ENCODE measurements at regions of chr7 and their contacts with region 1.

Region 1: DNA sequence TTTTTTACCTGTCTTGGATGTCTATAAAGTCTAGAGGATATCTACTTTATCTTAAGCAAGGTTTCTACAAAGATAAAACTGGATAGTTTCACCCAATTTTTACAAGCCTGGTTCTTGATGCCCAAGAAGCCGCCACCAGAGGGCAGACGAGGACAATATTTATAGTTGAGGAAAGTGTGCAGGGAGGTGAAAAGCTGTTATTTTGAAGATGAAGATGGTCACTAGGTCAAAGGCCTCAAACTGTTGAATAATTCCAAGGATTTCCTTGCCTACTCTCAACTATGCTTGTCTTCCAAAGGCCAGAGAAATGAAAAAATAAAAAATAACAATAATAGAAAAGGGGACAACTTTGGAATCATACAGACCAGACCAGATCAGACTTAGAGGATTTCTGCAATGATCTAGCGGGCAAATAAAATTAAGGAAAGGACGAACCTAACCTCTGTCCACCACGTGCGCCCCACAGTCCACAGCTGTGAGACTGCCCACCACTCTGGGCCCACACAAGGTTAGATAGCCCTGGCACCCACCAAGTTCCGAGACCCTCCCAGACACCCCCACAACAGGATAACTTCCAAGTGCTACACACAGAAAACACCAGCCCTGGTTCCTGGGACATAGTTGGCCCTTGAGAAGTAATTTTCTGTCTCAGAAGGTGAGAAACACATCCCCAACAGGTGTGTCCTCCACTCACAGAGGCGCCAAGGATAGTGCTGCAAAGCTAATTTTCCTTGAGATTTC is 2.8 kb downstream of the PKD1L1 start:
- DNase-seq: peak; percentile 87 to 94
- ATAC-seq: no peak
- H3K4me3 ChIP-seq: no peak overlapping the region
- H3K27ac ChIP-seq: no peak overlapping the region
- H3K4me1 ChIP-seq: no peaks in the 10 kb centered on the region
- H3K27me3 ChIP-seq: no peaks in the 10 kb centered on the region

Region 2: DNA sequence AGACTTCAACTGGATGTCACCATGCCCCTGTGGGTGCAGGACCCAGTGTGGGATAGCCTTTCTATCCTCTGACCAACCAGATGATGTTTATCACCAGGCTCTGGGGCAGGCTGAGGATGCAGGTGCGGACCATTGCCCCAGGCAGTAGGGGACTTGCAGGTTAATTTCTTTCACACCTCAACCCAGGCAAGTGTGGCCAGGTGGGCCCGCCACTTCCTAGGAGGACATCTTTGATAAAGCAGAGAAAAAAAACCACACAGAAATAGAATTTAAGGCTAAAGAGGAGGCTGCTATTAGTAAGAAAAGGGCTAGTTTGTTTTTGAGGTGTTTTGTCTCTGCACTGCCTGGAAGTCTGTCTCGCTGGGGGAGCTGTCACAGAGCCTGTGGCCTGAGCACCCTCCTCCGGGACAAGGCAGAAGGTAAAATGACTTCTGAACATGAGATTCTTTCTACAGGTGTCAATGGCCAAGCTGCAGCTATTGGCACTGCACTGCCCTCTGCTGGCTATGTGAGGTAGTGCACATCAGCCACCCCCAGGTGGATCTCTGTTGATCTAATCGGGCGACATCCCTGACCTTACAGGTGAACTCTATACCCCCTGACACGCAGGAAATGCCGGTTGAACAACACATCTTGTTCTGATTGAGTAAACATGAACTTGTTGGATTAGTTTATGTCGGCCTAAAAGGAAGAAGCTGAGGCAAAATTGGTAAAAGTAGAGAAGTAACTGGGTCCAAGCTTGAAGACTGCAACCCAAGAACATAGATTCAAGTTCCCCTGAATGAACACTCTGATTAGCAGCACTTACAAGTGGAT is 164.6 kb after region 1 on chr7:
- intact Hi-C with region 1: loop called (anchors 2 kb)
- DNase-seq: peak; percentile 75 to 90
- ATAC-seq: peak; percentile 87
- H3K4me3 ChIP-seq: no peak overlapping the region
- H3K27ac ChIP-seq: no peak overlapping the region
- H3K4me1 ChIP-seq: no peaks in the 10 kb centered on the region
- H3K27me3 ChIP-seq: no peaks in the 10 kb centered on the region

Measured in aorta (tissue), 5 donors.